Activated CD4-positive, alpha-beta T cell treated with anti-CD3 and anti-CD28 coated beads, Interleukin-2, amount 10 ng/mL, durations not matched to agents 7 days and 5 days (primary cell): ENCODE measurements at regions of chr18 and their contacts with region 1.

Region 1: GRCh38 chr18:12882453-12883371 is 1.3 kb downstream of the PTPN2 start:
- DNase-seq: peak; percentile 21
- H3K4me3 Mint-ChIP-seq: peak overlapping the region; percentile 91
- H3K27ac Mint-ChIP-seq: peak overlapping the region; percentile 90
- H3K4me1 Mint-ChIP-seq: peaks cover 60% of the 10 kb centered on the region
- H3K27me3 Mint-ChIP-seq: no peaks in the 10 kb centered on the region

Region 2: DNA sequence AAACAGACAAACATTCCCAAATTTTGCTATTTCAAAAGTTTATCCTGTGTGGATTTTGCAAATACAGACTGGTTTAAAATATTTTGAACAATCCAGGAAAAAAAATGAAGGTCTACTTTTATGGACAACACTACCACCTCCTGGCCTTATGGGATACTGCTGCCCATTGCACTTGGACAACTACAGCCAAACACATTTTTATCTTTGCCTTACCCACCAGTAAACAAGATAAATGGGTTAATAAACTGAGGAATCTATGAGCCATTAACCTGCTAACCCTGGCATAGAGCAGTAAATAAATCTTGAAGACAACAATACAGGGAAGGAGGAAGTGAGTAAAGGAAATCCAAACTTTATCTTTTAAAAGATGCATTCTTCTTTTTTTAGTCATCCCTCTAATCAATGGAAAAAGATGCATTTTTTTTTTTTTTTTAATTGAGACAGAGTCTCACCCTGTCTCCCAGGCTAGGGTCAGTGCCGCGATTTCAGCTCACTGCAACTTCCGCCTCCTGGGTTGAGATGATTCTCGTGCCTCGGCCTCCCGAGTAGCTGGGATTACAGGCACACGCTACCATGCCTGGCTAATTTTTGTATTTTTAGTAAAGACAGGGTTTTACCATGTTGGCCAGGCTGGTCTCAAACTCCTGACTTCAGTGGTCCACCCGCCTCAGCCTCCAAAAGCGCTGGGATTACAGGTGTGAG is 222.7 kb before region 1 on chr18:
- CTCF ChIA-PET with region 1: no interaction called
- POLR2A ChIA-PET with region 1: no interaction called
- DNase-seq: peak; percentile 48
- H3K4me3 Mint-ChIP-seq: no peak overlapping the region
- H3K27ac Mint-ChIP-seq: no peak overlapping the region
- H3K4me1 Mint-ChIP-seq: peaks cover 14% of the 10 kb centered on the region
- H3K27me3 Mint-ChIP-seq: peaks cover 21% of the 10 kb centered on the region

Region 3: GRCh38 chr18:12852566-12853315 is 30.0 kb before region 1 on chr18:
- CTCF ChIA-PET with region 1: interaction called, 10 read pairs
- POLR2A ChIA-PET with region 1: no interaction called
- DNase-seq: no peak
- H3K4me3 Mint-ChIP-seq: no peak overlapping the region
- H3K27ac Mint-ChIP-seq: no peak overlapping the region
- H3K4me1 Mint-ChIP-seq: peaks cover 46% of the 10 kb centered on the region
- H3K27me3 Mint-ChIP-seq: no peaks in the 10 kb centered on the region

Region 4: GRCh38 chr18:12862467-12862866 is 20.2 kb before region 1 on chr18:
- CTCF ChIA-PET with region 1: interaction called, 12 read pairs
- POLR2A ChIA-PET with region 1: no interaction called
- DNase-seq: no peak
- H3K4me3 Mint-ChIP-seq: no peak overlapping the region
- H3K27ac Mint-ChIP-seq: peak overlapping the region; percentile 69
- H3K4me1 Mint-ChIP-seq: peaks cover 55% of the 10 kb centered on the region
- H3K27me3 Mint-ChIP-seq: no peaks in the 10 kb centered on the region

Region 5: DNA sequence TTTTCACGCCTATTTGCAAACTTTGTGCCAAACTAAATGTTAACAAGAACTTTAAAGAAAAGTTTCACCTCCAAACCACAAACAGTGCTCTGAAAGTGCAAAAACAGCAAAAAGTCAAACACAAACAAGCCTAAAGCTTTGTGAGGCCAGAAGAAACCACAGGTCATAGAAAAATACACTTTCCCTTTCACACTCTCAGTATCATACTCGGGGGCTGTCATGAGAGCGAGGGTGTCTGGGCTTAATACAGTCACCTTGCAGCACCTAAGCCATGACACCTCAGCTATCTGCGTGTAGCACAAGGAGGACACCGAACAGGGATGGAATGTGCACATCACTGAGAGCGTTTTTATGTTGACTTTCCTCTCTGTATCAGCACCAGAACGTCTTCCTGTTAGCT is 38.5 kb after region 1 on chr18:
- CTCF ChIA-PET with region 1: no interaction called
- POLR2A ChIA-PET with region 1: no interaction called
- DNase-seq: peak; percentile 34
- H3K4me3 Mint-ChIP-seq: no peak overlapping the region
- H3K27ac Mint-ChIP-seq: peak overlapping the region; percentile 66
- H3K4me1 Mint-ChIP-seq: peaks cover 17% of the 10 kb centered on the region
- H3K27me3 Mint-ChIP-seq: peaks cover 9% of the 10 kb centered on the region

Region 6: DNA sequence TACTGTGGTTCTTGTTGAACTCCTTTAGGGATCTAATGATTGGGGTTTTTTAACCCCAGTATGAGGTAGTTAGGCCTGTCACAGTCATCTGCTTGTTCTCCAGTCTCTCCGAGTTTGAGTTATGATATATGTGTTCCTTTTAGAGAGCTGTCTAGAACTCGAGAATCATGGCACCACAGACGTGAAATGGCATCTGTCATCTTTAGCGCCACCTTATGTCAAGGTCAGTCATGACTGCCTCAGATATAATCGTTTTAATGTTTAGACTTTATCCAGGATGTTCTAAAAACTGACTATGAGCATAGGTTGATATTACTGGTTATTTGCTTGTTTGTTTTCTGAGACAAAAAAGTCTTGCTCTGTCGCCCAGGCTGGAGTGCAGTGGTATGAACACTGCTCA is 220.7 kb after region 1 on chr18:
- CTCF ChIA-PET with region 1: no interaction called
- POLR2A ChIA-PET with region 1: no interaction called
- DNase-seq: no peak
- H3K4me3 Mint-ChIP-seq: no peak overlapping the region
- H3K27ac Mint-ChIP-seq: no peak overlapping the region
- H3K4me1 Mint-ChIP-seq: peaks cover 6% of the 10 kb centered on the region
- H3K27me3 Mint-ChIP-seq: no peaks in the 10 kb centered on the region